MCF 10A (cell line): ENCODE measurements at regions of chr1 and their contacts with region 1.

Region 1: DNA sequence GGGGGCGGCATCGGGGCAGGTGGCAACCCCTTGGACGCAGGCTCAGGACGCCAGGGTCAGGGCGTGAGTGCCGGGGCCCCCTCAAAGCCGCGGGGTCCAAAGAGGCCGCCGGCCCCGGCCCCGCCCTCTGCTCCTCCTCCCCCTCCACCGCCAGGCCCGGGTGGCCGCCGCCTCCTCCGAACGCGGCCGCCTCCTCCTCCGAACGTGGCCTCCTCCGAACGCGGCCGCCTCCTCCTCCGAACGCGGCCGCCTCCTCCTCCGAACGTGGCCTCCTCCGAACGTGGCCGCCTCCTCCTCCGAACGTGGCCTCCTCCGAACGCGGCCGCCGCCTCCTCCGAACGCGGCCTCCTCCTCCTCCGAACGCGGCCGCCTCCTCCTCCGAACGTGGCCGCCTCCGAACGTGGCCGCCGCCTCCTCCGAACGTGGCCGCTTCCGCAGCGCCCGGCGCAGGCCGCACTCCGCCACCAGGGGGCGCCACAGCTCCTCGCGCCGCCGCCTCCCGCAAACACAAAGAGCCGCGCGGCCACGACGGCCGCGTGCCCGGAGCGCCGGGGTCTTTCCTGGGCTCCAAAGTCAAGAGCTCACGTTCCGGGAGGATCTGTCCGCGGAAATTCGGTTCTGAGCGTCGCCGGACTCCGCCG is 19.3 kb upstream of the SAMD11 start:
- DNase-seq: peak; percentile 79
- H3K4me3 Mint-ChIP-seq: peak overlapping the region; percentile 82
- H3K27ac Mint-ChIP-seq: peak overlapping the region; percentile 63
- H3K4me1 Mint-ChIP-seq: peaks cover 19% of the 10 kb centered on the region
- H3K27me3 Mint-ChIP-seq: peaks cover 12% of the 10 kb centered on the region
- CTCF ChIP-seq: peak; percentile 96

Region 2: DNA sequence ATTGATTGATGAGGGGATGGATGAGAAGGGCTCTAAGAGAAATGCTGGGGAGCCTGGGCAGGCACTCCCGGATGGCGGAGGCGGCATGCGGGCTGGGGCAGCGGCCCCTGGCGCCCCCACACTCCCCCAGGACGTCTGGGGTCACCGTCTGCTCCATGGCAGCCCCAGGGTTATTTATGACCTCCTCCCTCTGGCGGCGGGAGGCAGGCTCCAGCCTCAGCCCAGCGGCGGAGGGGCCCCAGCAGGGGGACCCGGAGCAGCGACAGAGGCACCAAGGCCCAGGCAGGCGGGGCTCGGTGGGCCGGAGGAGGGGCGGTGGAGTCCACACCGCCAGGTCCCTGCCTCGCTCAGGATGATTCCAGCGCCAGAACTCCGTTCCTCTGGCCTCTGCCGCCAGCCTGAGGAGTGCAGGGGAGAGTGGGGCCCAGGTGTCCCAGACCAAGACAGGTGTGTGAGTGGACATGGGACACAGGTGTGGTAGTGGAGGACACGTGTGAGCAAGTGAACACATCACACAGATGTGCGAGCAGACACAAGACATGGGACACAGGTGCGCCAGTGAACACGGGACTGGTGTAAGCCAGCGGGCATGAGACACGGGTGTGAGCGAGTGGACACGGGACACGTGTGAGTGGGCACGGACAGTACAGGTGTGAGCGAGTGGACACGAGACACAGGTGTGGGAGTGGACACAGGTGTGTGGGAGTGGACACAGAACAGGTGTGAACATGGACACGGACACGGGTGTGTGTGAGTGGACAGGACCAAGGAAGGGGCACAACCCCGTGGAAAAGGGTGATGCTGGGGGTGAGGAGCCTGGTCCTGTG is 16.8 kb after region 1 on chr1:
- CTCF ChIA-PET with region 1: interaction called, 6 read pairs
- POLR2A ChIA-PET with region 1: interaction called, 5 read pairs
- intact Hi-C with region 1: loop called (anchors 1 kb)
- DNase-seq: peak; percentile 72
- H3K4me3 Mint-ChIP-seq: no peak overlapping the region
- H3K27ac Mint-ChIP-seq: peak overlapping the region; percentile 54
- H3K4me1 Mint-ChIP-seq: peaks cover 13% of the 10 kb centered on the region
- H3K27me3 Mint-ChIP-seq: peaks cover 51% of the 10 kb centered on the region
- CTCF ChIP-seq: peak; percentile 32

Region 3: DNA sequence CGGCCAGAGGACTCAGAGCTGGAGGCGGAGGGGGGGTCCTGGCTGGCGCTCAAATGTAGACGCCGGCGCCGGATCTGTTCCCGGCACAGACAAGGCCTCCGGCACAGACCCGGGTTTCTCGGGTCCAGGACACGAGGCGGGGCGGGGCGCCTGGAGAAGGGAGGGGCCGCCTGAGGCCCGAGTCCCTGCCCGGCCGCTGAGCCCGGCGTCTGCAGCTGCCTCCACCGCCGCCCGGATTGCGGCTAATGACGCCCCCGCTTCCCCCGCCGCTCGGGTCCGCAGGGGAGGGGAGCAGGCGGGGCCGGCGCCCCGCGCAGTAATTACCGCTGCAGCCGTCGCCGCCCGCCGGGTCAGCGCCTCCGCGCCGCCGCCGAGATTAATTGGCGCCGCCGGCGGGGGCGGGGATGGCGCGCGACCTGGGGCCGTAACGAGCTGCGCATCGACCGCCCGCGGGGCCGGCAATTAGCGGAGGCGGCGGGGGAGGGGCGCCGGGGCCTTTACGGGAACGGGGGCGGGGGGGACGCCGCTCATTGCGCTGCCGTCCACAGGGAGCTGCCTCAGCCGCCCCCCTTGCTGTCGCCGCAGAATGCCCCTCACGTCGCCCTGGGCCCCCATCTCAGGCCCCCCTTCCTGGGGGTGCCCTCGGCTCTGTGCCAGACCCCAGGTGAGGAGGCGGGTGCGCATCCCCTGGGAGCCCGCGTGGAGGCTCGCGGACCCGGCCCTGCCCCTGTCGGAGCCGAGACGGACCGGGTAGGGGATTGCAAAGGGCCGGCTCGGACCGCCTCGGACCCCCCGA is 37.4 kb after region 1 on chr1:
- CTCF ChIA-PET with region 1: interaction called, 34 read pairs
- POLR2A ChIA-PET with region 1: interaction called, 18 read pairs
- intact Hi-C with region 1: loop called (anchors 5 kb)
- DNase-seq: peak; percentile 71
- H3K4me3 Mint-ChIP-seq: peak overlapping the region; percentile 60
- H3K27ac Mint-ChIP-seq: no peak overlapping the region
- H3K4me1 Mint-ChIP-seq: no peaks in the 10 kb centered on the region
- H3K27me3 Mint-ChIP-seq: no peaks in the 10 kb centered on the region
- CTCF ChIP-seq: no peak

Region 4: GRCh38 chr1:966611-967300 is 62.3 kb after region 1 on chr1:
- CTCF ChIA-PET with region 1: interaction called, 7 read pairs
- POLR2A ChIA-PET with region 1: interaction called, 11 read pairs
- intact Hi-C with region 1: no loop called
- DNase-seq: peak; percentile 85
- H3K4me3 Mint-ChIP-seq: peak overlapping the region; percentile 75
- H3K27ac Mint-ChIP-seq: peak overlapping the region; percentile 77
- H3K4me1 Mint-ChIP-seq: peaks cover 4% of the 10 kb centered on the region
- H3K27me3 Mint-ChIP-seq: no peaks in the 10 kb centered on the region
- CTCF ChIP-seq: no peak

Region 5: DNA sequence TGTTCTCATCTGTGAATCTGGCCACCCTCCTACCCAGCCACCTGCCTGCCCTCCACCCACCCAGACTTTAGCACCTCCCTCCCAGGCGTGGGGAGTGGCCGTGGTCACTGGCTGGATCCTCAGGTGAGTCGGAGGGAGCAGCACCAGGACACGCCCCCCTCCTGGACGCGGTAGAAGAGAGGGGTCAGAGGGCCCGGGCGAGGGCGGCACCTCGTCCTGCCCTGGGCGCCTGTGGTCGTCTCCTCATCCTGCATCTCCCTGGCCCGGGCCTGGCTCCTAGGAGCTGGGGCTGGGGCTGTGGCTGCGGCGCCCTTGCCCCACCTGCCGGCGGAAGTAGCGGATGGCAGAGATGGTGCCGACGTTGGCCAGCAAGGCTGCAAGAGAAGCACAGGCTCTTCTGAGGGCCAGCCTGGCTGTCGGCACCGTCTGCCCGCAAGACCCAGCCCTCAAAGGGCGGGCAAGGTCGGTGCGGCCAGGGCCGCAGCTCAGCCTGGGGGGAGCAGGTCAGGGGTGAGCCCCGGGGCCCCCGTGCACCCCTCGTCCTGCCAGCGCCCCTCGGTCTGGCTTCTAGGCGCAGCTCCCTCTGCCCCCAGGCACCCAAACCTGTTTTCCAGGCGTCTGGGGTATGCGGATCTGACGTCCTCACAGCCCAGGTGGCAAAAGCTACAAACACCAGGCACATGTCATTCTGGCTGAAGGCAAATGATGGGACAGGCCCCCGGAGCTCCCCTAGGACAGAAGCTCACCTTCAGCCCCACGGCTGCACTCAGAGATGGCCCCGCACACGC is 71.7 kb after region 1 on chr1:
- CTCF ChIA-PET with region 1: interaction called, 3 read pairs
- POLR2A ChIA-PET with region 1: no interaction called
- intact Hi-C with region 1: loop called (anchors 2 kb)
- DNase-seq: peak; percentile 83
- H3K4me3 Mint-ChIP-seq: no peak overlapping the region
- H3K27ac Mint-ChIP-seq: no peak overlapping the region
- H3K4me1 Mint-ChIP-seq: peaks cover 6% of the 10 kb centered on the region
- H3K27me3 Mint-ChIP-seq: no peaks in the 10 kb centered on the region
- CTCF ChIP-seq: peak; percentile 73

Region 6: GRCh38 chr1:1024771-1025451 is 120.5 kb after region 1 on chr1:
- CTCF ChIA-PET with region 1: no interaction called
- POLR2A ChIA-PET with region 1: no interaction called
- intact Hi-C with region 1: no loop called
- DNase-seq: peak; percentile 76
- H3K4me3 Mint-ChIP-seq: peak overlapping the region; percentile 55
- H3K27ac Mint-ChIP-seq: peak overlapping the region; percentile 84
- H3K4me1 Mint-ChIP-seq: peaks cover 11% of the 10 kb centered on the region
- H3K27me3 Mint-ChIP-seq: no peaks in the 10 kb centered on the region
- CTCF ChIP-seq: no peak